Sciatic nerve (tissue), 2 donors: ENCODE measurements at regions of chr12 and their contacts with region 1.

Region 1: DNA sequence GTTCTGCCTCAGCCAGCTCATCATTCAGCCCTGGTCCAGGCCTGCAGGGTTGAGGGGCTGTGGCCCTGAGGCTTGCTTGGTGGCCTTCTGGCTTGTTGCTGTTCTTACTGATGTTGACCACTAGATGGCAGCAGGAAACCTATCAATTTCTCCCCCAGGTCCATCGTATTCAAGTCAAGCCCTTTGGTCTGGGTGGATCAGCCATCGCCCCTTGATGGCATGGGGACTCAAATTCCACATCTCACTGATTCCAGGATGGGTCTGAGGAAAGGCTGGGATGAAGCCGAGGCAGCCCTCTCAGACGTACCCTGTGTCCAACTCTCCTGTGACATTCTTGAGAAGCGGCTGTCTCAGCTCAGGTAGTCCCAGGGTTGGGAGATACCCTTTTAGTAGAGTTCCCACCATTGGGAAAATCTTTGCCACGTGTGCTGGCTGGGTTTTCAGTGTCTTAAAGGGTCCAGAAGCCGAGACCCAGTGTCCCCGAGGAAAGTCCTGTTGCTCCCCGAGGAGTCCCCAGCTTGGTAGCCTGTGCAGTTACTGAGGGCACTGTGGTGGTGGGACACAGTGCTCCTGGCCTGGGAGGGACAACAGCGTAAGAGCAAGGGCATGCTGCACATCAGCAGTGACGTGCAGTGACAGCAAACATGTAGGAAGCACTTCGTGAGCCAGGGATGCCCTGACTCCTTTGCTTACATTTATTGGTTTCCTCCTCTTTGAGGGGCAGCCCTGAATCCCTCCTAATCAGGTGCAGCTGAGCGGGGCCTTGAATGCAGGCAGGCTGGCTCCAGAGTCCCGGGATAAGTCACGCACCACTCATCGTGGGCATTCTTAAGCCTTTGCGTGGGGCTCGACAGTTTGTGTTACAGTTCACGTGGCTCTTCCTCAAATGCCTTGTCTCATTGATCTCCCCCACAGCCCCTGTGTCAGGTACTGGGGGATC is 58.6 kb downstream of the TSPAN9 start:
- DNase-seq: no peak
- ATAC-seq: peak; percentile 81

Region 2: DNA sequence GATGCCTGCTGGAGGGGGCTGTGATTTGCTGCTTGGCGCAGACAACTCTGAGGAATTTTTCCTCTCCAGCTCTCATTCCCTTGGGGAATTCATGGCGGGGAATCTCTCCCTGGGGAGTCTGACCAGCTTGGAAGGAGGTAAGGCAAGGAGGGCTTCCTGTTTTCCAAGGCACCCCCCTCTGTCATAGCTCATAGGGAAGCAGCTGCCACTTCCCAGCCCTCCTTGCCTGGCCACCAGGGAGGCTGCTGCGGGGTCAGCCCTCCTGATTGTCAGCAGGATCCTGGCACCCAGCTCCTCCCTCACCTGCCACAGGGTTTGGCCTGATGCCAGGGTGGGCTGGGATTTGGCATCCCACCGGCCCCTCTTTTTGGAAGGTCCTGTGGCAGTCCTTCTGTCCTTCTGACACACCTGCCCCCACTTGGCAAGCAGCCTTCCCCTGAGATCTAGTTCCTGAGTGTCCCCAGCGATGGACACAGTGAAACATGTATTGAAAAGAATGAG is 16.3 kb after region 1 on chr12:
- intact Hi-C with region 1: no loop called
- DNase-seq: no peak
- ATAC-seq: peak; percentile 27

Region 3: GRCh38 chr12:3168223-3169221 is 32.7 kb after region 1 on chr12:
- intact Hi-C with region 1: no loop called
- DNase-seq: no peak
- ATAC-seq: peak; percentile 31

Region 4: DNA sequence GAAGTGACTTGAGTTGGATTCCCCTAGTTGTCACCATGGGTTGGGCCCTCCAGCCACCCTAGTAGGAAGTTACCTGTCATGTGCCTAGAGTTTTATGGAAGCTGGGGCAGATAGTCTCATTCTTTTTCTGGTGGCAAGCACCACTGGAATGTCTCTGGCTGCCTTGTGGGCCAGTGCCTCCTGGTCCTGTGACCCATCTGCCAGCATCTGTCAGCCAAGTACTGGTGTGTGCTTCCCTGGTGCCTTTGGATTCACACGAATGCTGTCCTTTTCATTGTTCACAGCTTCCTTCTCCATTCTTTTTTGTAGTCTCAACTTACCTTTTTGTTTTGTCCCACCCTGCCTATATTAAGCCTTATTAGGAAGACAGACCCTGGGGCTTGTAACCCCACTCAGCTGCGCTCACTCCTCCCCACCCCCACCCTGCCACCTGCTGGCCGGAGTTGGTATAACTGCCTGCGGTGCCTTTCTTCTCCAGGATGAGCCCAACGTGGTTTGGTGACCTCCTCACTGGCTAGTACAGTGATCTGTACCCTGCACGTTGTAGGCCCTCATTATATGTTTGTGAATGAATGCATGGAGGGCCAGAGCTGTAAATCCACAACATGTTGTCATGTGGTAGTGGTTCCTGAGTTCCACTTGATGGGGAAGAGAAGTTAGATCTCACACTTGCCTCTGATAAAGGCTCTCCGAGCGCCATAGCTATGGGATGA is 67.1 kb after region 1 on chr12:
- intact Hi-C with region 1: loop called (anchors 10 kb)
- DNase-seq: peak; percentile 81
- ATAC-seq: peak; percentile 62

Region 5: GRCh38 chr12:3275171-3276041 is 139.6 kb after region 1 on chr12:
- intact Hi-C with region 1: loop called (anchors 2 kb)
- DNase-seq: peak; percentile 90
- ATAC-seq: peak; percentile 77